Activated CD4-positive, alpha-beta T cell treated with anti-CD3 and anti-CD28 coated beads, Interleukin-2, amount 10 ng/mL, durations not matched to agents 24 days and 14 days (primary cell): ENCODE measurements at regions of chrX and their contacts with region 1.

Region 1: DNA sequence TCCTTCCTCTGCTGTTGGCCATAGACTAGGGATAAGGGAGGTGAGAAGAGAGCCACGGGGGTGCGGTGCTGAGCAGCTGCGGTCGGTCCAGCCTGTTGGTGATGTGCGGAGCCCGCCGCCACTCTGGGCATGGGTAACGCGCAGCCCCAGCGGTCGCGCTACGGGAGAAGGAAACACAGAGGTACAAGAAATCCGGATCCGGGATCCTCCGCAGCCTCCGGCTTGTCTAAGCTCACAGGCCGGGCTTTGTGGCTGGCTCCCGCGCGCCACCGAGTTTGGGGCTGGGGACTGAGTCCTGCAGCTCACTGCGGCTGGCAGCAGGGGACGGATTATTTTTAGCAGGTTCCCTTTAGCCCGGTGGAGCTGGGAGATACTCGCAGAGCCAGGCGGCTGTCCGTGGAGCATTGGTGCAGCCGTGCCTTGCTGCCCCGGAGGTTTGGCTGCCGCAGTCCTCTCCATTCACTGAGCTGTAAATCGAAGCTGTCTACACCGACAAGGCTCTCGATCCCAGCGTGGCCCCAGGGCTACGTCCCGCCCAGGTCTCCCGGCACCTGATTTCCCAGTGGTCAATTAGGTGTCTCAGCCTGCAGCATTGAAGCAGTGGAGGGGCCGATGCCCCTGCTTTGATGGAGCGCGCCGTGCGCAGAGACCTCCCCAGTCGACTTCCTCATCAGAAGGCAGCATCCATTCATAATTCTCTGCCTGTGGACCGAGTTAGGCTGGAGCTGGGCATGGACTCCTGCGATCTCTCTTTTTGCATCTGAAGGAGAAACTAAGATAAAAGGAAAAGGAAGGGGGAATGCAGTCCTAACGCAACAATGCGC is 81.9 kb upstream of the SCML1 start:
- DNase-seq: peak; percentile 70
- H3K4me3 Mint-ChIP-seq: peak overlapping the region; percentile 91
- H3K27ac Mint-ChIP-seq: peak overlapping the region; percentile 89
- H3K4me1 Mint-ChIP-seq: peaks cover 23% of the 10 kb centered on the region
- H3K27me3 Mint-ChIP-seq: peaks cover 2% of the 10 kb centered on the region

Region 2: DNA sequence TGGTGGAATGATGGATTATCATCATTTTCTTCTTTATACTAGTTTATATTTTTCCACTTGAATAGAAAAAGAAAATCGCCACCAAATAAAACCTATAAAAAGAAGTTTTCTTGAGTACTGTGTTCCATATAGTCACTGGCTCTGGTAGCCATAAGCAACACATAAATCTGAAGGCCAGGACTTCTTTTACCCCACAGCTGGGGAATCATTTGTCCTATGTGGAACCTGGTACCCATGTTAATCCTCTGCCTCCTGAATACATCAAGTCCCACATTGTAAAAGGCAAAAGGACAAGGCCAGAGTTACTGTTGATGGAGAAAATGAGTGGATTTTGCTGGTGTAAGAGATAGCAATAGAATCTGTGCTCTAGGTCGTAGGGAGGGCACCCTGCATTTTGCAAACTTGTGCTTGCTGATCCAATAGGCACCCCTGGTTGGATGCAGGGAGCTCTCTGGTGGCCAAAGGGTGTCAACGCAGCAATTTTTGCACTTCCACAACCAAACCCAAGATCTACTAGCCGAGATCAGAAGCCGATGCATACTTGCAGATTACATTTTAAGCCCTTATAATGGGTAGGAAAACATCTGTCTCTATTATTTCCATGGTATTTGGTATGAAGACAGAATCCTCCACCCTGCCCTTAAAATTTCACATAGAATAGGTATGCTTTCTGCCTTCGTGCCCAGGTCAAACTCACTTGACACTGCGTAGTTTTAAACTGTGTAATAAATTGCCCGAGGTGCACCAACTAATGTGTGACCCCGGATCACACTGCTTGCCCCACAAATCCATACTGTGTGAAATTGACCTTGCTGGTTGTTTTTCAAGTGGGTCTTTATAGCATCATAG is 64.3 kb before region 1 on chrX:
- intact Hi-C with region 1: loop called (anchors 10 kb)
- DNase-seq: peak; percentile 71
- H3K4me3 Mint-ChIP-seq: peak overlapping the region; percentile 45
- H3K27ac Mint-ChIP-seq: peak overlapping the region; percentile 60
- H3K4me1 Mint-ChIP-seq: peaks cover 15% of the 10 kb centered on the region
- H3K27me3 Mint-ChIP-seq: peaks cover 2% of the 10 kb centered on the region

Region 3: GRCh38 chrX:17632942-17633341 is 22.5 kb before region 1 on chrX:
- intact Hi-C with region 1: loop called (anchors 2 kb)
- DNase-seq: peak; percentile 65
- H3K4me3 Mint-ChIP-seq: peak overlapping the region; percentile 49
- H3K27ac Mint-ChIP-seq: peak overlapping the region; percentile 68
- H3K4me1 Mint-ChIP-seq: peaks cover 5% of the 10 kb centered on the region
- H3K27me3 Mint-ChIP-seq: no peaks in the 10 kb centered on the region

Region 4: GRCh38 chrX:17669458-17669857 is 14.0 kb after region 1 on chrX:
- intact Hi-C with region 1: loop called (anchors 1 kb)
- DNase-seq: no peak
- H3K4me3 Mint-ChIP-seq: peak overlapping the region; percentile 22
- H3K27ac Mint-ChIP-seq: peak overlapping the region; percentile 78
- H3K4me1 Mint-ChIP-seq: peaks cover 14% of the 10 kb centered on the region
- H3K27me3 Mint-ChIP-seq: no peaks in the 10 kb centered on the region

Region 5: GRCh38 chrX:17736856-17737706 is 81.7 kb after region 1 on chrX and contains the start of gene SCML1:
- intact Hi-C with region 1: loop called (anchors 2 kb)
- DNase-seq: peak; percentile 94
- H3K4me3 Mint-ChIP-seq: peak within 1 kb of the TSS; percentile 85
- H3K27ac Mint-ChIP-seq: peak within 1 kb of the TSS; percentile 76
- H3K4me1 Mint-ChIP-seq: peaks cover 16% of the 10 kb centered on the region
- H3K27me3 Mint-ChIP-seq: peaks cover 28% of the 10 kb centered on the region
- total RNA-seq, gene SCML1: 1.4 and 1.7 TPM in 2 replicates